ENCODE measurements at regions of chr7 and their contacts with region 1.

Region 1: GRCh38 chr7:42745357-42746059 is 166.4 kb downstream of the C7orf25 start:
- H3K4me3 ChIP-seq: no peak overlapping the region
- H3K27ac ChIP-seq: no peak overlapping the region
- H3K4me1 ChIP-seq: no peaks in the 10 kb centered on the region
- CTCF ChIP-seq: no peak

Region 2: GRCh38 chr7:42720876-42721796 is 24.4 kb before region 1 on chr7:
- CTCF ChIA-PET with region 1: interaction called, 26 read pairs
- POLR2A ChIA-PET with region 1: no interaction called
- H3K4me3 ChIP-seq: no peak overlapping the region
- H3K27ac ChIP-seq: no peak overlapping the region
- H3K4me1 ChIP-seq: no peaks in the 10 kb centered on the region
- CTCF ChIP-seq: no peak

Region 3: GRCh38 chr7:42726066-42726785 is 19.3 kb before region 1 on chr7:
- CTCF ChIA-PET with region 1: interaction called, 26 read pairs
- POLR2A ChIA-PET with region 1: no interaction called
- H3K4me3 ChIP-seq: no peak overlapping the region
- H3K27ac ChIP-seq: no peak overlapping the region
- H3K4me1 ChIP-seq: no peaks in the 10 kb centered on the region
- CTCF ChIP-seq: no peak

Region 4: GRCh38 chr7:42902331-42902730 is 156.8 kb after region 1 on chr7:
- CTCF ChIA-PET with region 1: no interaction called
- POLR2A ChIA-PET with region 1: no interaction called
- H3K4me3 ChIP-seq: no peak overlapping the region
- H3K27ac ChIP-seq: no peak overlapping the region
- H3K4me1 ChIP-seq: no peaks in the 10 kb centered on the region
- CTCF ChIP-seq: no peak

Region 5: GRCh38 chr7:42940985-42941847 is 195.7 kb after region 1 on chr7:
- CTCF ChIA-PET with region 1: no interaction called
- POLR2A ChIA-PET with region 1: no interaction called
- H3K4me3 ChIP-seq: no peak overlapping the region
- H3K27ac ChIP-seq: no peak overlapping the region
- H3K4me1 ChIP-seq: no peaks in the 10 kb centered on the region
- CTCF ChIP-seq: peak; percentile 70